ENCODE measurements at regions of chr11 and their contacts with region 1.

Region 1: GRCh38 chr11:16632295-16633200 is 105.9 kb upstream of the C11orf58 start:
- DNase-seq: peak; percentile 43
- H3K4me3 ChIP-seq: no peak overlapping the region
- H3K27ac ChIP-seq: no peak overlapping the region
- H3K4me1 ChIP-seq: peaks cover 9% of the 10 kb centered on the region
- H3K27me3 ChIP-seq: no peaks in the 10 kb centered on the region
- CTCF ChIP-seq: peak; percentile 54 to 58

Region 2: DNA sequence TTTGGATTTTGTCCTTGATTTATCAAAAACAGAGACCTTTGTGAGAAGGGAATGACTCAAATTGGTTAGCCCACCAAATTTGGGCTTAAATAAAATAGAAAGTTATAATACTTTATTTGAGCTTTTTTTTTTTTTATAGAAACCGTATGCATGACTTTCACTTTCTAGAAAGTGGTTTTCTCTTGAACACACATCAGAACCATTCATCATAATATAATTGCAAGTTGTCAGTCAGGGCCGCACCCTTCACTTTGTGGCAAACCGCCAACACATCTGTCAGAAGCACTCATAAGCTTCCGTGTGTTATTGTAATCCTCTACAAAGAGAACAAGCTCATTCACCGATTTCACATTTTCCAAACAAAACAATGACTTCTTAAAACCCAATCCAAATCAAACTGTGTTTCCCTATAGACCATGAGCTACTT is 352.3 kb before region 1 on chr11:
- CTCF ChIA-PET with region 1: no interaction called
- dilution Hi-C with region 1: no loop called
- in situ Hi-C with region 1: no loop called
- intact Hi-C with region 1: no loop called
- DNase-seq: peak; percentile 84
- H3K4me3 ChIP-seq: no peak overlapping the region
- H3K27ac ChIP-seq: no peak overlapping the region
- H3K4me1 ChIP-seq: no peaks in the 10 kb centered on the region
- H3K27me3 ChIP-seq: no peaks in the 10 kb centered on the region
- CTCF ChIP-seq: no peak

Region 3: DNA sequence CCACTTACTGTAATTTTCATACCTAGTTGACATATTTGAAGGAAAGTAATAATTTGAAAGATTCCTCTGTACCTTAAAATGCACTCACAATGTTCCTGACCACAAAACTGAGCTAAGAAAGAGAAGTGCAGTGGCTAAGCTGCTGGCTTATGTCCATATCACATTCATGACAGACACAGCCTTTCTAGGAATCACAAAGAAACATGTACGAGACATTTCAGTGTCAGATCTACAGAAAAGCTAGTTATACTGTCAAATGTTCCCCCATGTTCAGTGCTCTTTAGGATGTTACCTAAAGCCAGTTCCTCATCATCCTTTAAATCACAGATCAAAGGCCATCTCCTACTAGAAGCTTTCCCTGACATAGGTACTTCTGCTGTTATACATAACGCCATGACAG is 36.3 kb before region 1 on chr11:
- CTCF ChIA-PET with region 1: interaction called, 17 read pairs
- dilution Hi-C with region 1: no loop called
- in situ Hi-C with region 1: no loop called
- intact Hi-C with region 1: no loop called
- DNase-seq: no peak
- H3K4me3 ChIP-seq: no peak overlapping the region
- H3K27ac ChIP-seq: no peak overlapping the region
- H3K4me1 ChIP-seq: no peaks in the 10 kb centered on the region
- H3K27me3 ChIP-seq: no peaks in the 10 kb centered on the region
- CTCF ChIP-seq: no peak

Region 4: GRCh38 chr11:16738193-16738946 is 105.8 kb after region 1 on chr11 and contains the start of gene C11orf58:
- CTCF ChIA-PET with region 1: no interaction called
- dilution Hi-C with region 1: no loop called
- in situ Hi-C with region 1: no loop called
- intact Hi-C with region 1: loop called (anchors 2 kb)
- DNase-seq: peak; percentile 96
- H3K4me3 ChIP-seq: peak within 1 kb of the TSS; percentile 77 to 80 (median 77)
- H3K27ac ChIP-seq: peak within 1 kb of the TSS; percentile 96
- H3K4me1 ChIP-seq: peaks cover 12% of the 10 kb centered on the region
- H3K27me3 ChIP-seq: no peaks in the 10 kb centered on the region
- CTCF ChIP-seq: no peak
- total RNA-seq, gene C11orf58: 94.0 to 115 TPM

Region 5: DNA sequence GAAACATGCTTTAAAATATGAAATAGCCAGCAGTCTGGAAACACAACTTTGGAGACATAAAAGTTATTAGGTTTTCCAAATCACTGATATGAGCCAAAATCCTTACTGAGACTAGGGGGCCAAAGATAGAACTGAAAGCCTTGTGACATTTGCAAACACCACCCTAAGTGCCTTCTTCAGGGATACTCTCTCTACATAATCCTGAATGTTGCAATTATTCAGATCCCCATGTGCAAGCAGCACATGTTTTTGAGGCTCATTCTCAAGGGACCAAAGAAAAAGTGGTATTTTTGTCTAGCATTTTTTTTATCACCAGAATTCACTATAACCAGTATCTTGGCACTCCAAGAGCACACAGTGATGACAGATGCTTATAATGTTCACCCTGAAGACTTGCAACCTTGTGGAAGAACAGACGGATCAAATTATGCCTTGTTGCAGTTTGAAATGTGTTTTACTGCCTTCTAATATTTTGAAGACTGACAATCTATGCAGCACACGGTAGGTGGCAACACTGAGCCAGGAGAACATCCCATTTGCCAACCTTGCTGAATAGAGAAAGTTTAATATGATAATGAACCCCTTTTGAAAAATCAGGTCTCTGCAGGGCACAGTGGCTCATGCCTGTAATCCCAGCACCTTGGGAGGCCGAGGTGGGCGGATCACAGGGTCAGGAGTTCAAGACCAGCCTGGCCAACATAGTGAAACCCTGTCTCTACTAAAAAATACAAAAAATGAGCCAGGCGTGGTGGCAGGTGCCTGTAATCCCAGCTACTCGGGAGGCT is 303.2 kb after region 1 on chr11:
- CTCF ChIA-PET with region 1: no interaction called
- dilution Hi-C with region 1: no loop called
- in situ Hi-C with region 1: no loop called
- intact Hi-C with region 1: loop called (anchors 2 kb)
- DNase-seq: peak; percentile 45
- H3K4me3 ChIP-seq: no peak overlapping the region
- H3K27ac ChIP-seq: no peak overlapping the region
- H3K4me1 ChIP-seq: no peaks in the 10 kb centered on the region
- H3K27me3 ChIP-seq: no peaks in the 10 kb centered on the region
- CTCF ChIP-seq: peak; percentile 80 to 85